Activated T-helper 2 cell treated with anti-CD3 and anti-CD28 coated beads, Interferon-gamma antibody, Interleukin-2, Interleukin-4, amounts not matched to agents 10 μg/mL and 5 μg/mL and 100 μg/mL, durations not matched to agents 14 hours and 24 hours and 36 hours (primary cell): ENCODE measurements at regions of chr6 and their contacts with region 1.

Region 1: DNA sequence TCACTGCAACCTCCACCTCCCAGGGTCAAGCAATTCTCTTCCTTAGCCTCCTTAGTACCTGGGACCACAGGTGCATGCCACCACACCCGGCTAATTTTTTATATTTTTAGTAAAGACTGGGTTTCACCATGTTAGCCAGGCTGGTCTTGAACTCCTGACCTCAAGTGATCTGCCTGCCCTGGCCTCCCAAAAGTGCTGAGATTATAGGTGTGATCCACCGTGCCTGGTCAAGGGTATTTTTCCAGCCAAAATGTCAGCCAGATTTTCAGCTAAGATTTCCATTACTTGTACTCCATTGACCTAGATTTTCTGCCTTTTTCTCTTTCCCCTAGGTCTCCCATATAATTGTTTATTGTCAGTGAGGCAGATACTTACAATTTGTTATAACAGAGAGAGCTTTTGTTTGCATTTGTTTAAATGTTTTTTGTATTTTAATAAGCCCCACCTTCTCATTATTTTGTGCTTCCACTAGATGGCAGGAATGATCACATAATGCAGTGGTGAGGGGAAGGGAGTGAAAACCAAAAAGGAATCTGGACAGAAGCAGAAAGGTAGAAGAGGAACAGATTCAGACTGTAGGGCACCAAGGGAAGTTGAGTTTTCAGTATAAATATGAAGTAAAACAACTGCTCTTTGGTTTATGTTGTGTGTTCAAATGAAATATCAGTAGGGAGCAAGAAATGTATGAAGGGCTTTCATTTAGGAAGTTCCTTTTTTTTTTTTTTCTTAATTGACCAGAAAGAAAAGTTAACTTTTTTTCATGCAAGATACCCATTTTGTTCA is 29.7 kb downstream of the RPF2 start:
- DNase-seq: no peak
- H3K4me3 Mint-ChIP-seq: no peak overlapping the region
- H3K27ac Mint-ChIP-seq: no peak overlapping the region
- H3K4me1 Mint-ChIP-seq: peaks cover 4% of the 10 kb centered on the region
- H3K27me3 Mint-ChIP-seq: no peaks in the 10 kb centered on the region

Region 2: GRCh38 chr6:110981202-110981600 is 30.4 kb before region 1 on chr6:
- intact Hi-C with region 1: no loop called
- DNase-seq: no peak
- H3K4me3 Mint-ChIP-seq: peak overlapping the region; percentile 97
- H3K27ac Mint-ChIP-seq: peak overlapping the region; percentile 98
- H3K4me1 Mint-ChIP-seq: peaks cover 30% of the 10 kb centered on the region
- H3K27me3 Mint-ChIP-seq: no peaks in the 10 kb centered on the region

Region 3: GRCh38 chr6:111210194-111210728 is 198.7 kb after region 1 on chr6:
- intact Hi-C with region 1: loop called (anchors 1 kb)
- DNase-seq: no peak
- H3K4me3 Mint-ChIP-seq: no peak overlapping the region
- H3K27ac Mint-ChIP-seq: no peak overlapping the region
- H3K4me1 Mint-ChIP-seq: no peaks in the 10 kb centered on the region
- H3K27me3 Mint-ChIP-seq: no peaks in the 10 kb centered on the region